Activated naive CD4-positive, alpha-beta T cell treated with anti-CD3 and anti-CD28 coated beads, Interleukin-2, amount 10 ng/mL, durations not matched to agents 7 days and 5 days (primary cell): ENCODE measurements at regions of chr12 and their contacts with region 1.

Region 1: DNA sequence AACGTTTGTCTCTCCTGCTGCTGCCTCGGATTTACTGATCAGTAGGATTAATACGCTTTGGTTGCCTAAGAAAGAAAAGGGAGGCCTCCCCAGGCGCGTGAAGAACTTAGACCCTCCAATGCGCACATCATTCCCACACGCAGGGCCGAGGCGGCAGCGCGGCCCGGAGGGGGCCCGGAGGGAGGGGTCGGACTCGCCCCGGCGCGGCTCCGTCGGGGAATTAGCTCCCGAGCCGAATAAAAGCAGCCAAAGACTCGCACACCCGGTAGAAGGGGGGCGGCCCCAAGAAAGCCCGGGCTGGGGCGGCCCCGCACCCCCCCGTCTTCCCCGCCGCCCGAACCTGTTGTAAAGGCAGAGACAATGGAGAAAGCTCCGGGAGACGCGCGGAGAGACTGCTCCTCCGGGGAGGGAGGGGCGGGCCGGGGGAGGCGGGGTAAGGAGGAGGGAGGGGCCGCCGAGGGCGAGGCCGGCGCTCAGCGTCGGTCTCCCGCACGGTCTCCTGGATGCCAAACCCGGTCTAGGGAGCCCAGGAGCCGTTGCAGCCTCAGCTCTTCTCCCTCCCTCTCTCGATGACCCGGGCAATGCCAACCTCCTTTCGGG is at the start of gene NELL2:
- DNase-seq: peak; percentile 78
- H3K4me3 Mint-ChIP-seq: peak within 1 kb of the TSS; percentile 98
- H3K27ac Mint-ChIP-seq: peak within 1 kb of the TSS; percentile 83
- H3K4me1 Mint-ChIP-seq: peaks cover 41% of the 10 kb centered on the region
- H3K27me3 Mint-ChIP-seq: peaks cover 24% of the 10 kb centered on the region

Region 2: GRCh38 chr12:44774815-44775411 is 101.1 kb before region 1 on chr12:
- CTCF ChIA-PET with region 1: interaction called, 47 read pairs
- DNase-seq: peak; percentile 71
- H3K4me3 Mint-ChIP-seq: no peak overlapping the region
- H3K27ac Mint-ChIP-seq: no peak overlapping the region
- H3K4me1 Mint-ChIP-seq: no peaks in the 10 kb centered on the region
- H3K27me3 Mint-ChIP-seq: no peaks in the 10 kb centered on the region

Region 3: GRCh38 chr12:44780221-44780790 is 95.7 kb before region 1 on chr12:
- CTCF ChIA-PET with region 1: interaction called, 47 read pairs
- DNase-seq: no peak
- H3K4me3 Mint-ChIP-seq: no peak overlapping the region
- H3K27ac Mint-ChIP-seq: no peak overlapping the region
- H3K4me1 Mint-ChIP-seq: peaks cover 5% of the 10 kb centered on the region
- H3K27me3 Mint-ChIP-seq: no peaks in the 10 kb centered on the region

Region 4: GRCh38 chr12:44812062-44812461 is 64.0 kb before region 1 on chr12:
- CTCF ChIA-PET with region 1: interaction called, 125 read pairs
- DNase-seq: peak; percentile 60
- H3K4me3 Mint-ChIP-seq: no peak overlapping the region
- H3K27ac Mint-ChIP-seq: no peak overlapping the region
- H3K4me1 Mint-ChIP-seq: peaks cover 36% of the 10 kb centered on the region
- H3K27me3 Mint-ChIP-seq: no peaks in the 10 kb centered on the region

Region 5: DNA sequence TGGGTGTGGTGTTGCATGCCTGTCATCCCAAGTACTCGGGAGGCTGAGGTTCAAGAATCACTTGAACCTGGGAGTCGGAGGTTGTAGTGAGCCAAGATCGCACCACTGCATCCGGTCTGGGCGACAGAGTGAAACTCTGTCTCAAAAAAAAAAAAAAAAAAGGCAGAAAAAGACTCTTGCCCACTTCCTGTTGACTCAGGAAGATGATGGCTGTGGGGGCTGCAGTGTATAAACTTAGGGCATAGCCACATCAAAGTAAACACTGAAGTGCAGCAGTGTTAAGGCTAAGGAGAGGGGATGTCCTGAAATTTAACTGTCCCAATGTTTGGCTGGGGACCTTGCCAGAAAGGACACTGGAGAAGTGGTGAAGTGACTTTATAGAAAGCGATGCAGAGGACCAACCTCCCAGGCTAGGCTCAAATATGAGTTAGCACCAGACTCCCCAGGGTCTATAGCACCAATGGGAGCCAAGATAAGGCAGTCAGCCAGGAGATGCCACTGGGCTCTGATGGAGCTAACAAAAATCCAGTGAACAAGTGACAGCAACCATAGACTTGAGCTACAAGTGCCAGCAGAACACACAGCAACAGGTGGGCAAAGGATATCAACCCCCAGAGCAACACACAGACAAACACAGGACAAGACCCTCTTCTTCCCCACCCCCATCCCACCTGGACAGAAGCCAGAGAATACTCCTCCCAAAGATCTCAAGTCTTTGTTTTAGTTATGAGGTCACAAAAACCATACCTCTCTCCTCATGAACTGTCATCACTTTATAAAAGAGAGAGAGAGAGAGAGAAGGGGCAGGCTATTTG is 28.0 kb before region 1 on chr12:
- CTCF ChIA-PET with region 1: interaction called, 18 read pairs
- DNase-seq: peak; percentile 82
- H3K4me3 Mint-ChIP-seq: peak overlapping the region; percentile 24
- H3K27ac Mint-ChIP-seq: peak overlapping the region; percentile 93
- H3K4me1 Mint-ChIP-seq: peaks cover 84% of the 10 kb centered on the region
- H3K27me3 Mint-ChIP-seq: no peaks in the 10 kb centered on the region

Region 6: GRCh38 chr12:45273717-45274271 is 397.7 kb after region 1 on chr12:
- CTCF ChIA-PET with region 1: no interaction called
- DNase-seq: no peak
- H3K4me3 Mint-ChIP-seq: no peak overlapping the region
- H3K27ac Mint-ChIP-seq: no peak overlapping the region
- H3K4me1 Mint-ChIP-seq: peaks cover under 1% of the 10 kb centered on the region
- H3K27me3 Mint-ChIP-seq: no peaks in the 10 kb centered on the region